ENCODE measurements at regions of chr6 and their contacts with region 1.

Region 1: DNA sequence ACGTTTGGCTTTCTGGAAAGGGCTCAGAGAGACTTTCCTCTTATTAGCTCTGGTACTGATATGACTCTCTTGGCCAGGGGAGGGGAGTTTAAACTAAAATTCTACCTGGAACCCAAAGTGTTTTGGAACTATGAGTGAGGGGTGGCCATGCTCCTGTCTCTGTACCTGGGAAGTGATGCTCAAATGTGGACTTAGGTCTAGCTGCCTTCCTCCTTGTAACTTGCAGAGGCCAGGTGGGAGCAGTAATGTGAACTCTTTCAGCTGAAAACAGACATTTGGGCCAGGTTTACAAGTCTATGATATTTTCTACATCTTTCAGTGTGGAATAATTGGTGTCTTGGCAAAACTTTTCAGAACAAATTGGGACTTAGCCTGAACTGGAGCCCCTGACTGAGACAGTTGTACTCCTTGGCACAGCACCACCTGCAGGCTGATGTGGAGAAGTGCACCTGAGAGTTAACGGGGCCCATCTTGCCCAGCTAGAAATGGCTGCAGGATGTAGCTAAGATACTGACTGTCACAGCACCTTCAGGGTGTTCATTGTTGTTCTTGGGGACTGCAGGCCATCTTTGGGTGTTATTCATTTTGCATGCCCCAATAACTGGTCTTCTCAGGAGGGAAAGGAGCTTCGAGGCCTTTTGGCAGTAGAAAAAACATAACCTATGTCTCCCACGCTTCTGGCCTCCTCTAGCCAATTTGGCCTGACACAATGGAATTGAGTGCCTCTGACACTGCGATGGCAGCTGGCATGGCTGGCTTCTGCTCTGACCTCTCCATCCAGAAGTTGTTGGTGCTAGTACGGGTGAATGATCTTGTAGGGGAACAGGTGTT is 37.1 kb downstream of the CD109 start:
- DNase-seq: peak; percentile 50 to 70
- ATAC-seq: peak; percentile 84 to 92 (median 90)
- H3K4me3 ChIP-seq: no peak overlapping the region
- H3K27ac ChIP-seq: no peak overlapping the region
- H3K4me1 ChIP-seq: peaks cover 0 to 2% (median 0%) of the 10 kb centered on the region in 9 donors
- H3K27me3 ChIP-seq: no peaks in the 10 kb centered on the region
- CTCF ChIP-seq: peak; percentile 82 to 95 (median 91)

Region 2: GRCh38 chr6:73675466-73676098 is 57.5 kb before region 1 on chr6:
- intact Hi-C with region 1: loop called (anchors 1 to 5 kb)
- DNase-seq: peak; percentile 51 to 84
- ATAC-seq: peak; percentile 84 to 90 (median 88)
- H3K4me3 ChIP-seq: no peak overlapping the region
- H3K27ac ChIP-seq: no peak overlapping the region
- H3K4me1 ChIP-seq: peaks cover 0 to 11% (median 0%) of the 10 kb centered on the region in 9 donors
- H3K27me3 ChIP-seq: no peaks in the 10 kb centered on the region
- CTCF ChIP-seq: peak; percentile 88 to 97 (median 91)

Measured in heart right ventricle (tissue), 16 donors.